Heart right ventricle (tissue), 16 donors: ENCODE measurements at regions of chr4 and their contacts with region 1.

Region 1: DNA sequence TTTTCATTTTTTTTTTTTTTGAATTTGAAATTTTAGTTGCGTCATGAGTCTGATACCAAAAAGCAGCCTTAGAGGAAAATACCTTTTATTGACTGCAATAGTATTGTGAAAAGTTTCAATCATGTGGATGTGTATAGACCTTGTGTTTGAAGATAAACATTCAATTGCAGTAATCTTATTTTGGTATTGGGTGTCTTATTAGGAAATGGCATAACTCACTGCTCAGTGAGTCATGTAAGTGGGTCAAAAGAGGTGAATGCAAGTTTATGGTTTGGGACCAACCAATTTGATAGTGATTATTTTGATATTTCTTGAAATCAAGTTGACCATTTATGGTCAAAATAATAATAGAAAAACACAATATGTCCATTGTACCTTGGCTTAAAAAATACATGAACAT is 627.8 kb upstream of the SLIT2 start:
- DNase-seq: no peak
- ATAC-seq: no peak
- H3K4me3 ChIP-seq: no peak overlapping the region
- H3K27ac ChIP-seq: no peak overlapping the region
- H3K4me1 ChIP-seq: no peaks in the 10 kb centered on the region
- H3K27me3 ChIP-seq: no peaks in the 10 kb centered on the region
- CTCF ChIP-seq: no peak

Region 2: DNA sequence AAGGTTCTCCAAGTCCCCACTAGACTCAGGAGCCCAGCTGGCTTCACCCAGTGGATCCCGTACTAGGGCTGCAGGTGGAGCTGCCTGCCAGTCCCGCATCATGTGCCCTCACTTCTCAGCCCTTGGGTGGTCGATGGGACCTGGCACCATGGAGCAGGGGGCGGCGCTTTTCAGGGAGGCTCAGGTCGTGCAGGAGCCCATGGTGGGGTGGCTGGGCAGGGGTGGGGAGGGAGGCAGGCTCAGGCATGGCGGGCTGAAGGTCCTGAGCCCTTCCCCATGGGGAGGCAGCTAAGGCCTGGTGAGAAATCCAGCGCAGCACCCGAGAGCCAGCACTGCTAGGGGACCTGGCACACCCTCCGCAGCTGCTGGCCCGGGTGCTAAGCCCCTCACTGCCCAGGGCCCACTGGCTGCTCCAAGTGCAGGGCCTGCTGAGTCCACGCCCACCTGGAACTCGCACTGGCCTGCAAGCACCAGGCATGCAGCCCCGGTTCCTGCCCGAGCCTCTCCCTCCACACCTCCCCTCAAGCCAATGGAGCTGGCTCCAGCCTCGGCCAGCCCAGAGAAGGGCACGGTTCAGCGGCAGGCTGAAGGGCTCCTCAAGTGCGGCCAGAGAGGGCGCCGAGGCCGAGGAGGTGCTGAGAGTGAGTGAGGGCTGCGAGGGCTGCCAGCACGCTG is 555.2 kb after region 1 on chr4:
- intact Hi-C with region 1: loop called in 1 of 10 experiments (anchors 5 kb)
- DNase-seq: no peak
- ATAC-seq: no peak
- H3K4me3 ChIP-seq: no peak overlapping the region
- H3K27ac ChIP-seq: no peak overlapping the region
- H3K4me1 ChIP-seq: no peaks in the 10 kb centered on the region
- H3K27me3 ChIP-seq: no peaks in the 10 kb centered on the region
- CTCF ChIP-seq: no peak